MCF 10A (cell line): ENCODE measurements at regions of chr7 and their contacts with region 1.

Region 1: DNA sequence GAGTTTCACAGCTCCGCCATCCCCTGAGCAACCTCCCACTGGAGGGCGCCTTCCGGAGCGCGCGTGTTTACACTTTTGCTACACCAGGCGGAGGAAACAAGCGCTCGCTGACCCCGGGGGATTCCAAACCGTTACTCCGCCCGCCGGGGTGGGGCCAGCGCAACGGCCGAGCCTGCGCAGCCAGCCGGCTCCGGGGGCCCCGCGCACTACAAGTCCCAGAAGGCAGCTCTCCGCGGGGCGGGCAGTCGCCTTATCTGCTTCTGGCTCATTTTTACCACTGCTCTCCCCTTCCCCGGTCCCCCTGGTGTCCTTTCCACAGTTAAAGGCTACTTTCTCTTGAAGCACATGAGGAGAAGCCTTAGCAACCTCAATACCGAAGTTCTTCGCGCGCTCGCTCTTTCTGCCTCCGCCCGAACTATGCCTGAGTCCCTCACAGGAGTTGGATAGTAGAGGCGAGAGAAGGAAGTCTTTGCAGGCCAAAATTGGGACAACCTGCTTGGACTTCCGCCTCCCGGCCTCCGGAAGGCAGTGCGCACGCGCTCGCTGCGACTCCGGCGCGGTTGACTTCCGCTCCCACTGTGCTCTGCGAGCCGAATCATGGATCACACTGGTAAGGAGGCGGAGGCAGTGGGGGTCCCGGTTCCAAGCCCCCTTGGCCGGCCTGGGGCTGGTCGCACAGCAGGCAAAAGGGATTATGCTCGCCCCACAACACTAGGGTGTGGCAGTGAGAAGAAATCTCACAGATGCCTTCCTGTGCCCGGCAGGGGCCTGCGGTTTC is at the start of gene CBLL1:
- DNase-seq: peak; percentile 92
- H3K4me3 Mint-ChIP-seq: peak within 1 kb of the TSS; percentile 94
- H3K27ac Mint-ChIP-seq: peak within 1 kb of the TSS; percentile 97
- H3K4me1 Mint-ChIP-seq: peaks cover 21% of the 10 kb centered on the region
- H3K27me3 Mint-ChIP-seq: no peaks in the 10 kb centered on the region
- CTCF ChIP-seq: peak; percentile 58
- total RNA-seq, gene CBLL1: 34.5 and 39.7 TPM in 2 replicates

Region 2: GRCh38 chr7:107462740-107463444 is 280.9 kb before region 1 on chr7:
- CTCF ChIA-PET with region 1: interaction called, 21 read pairs
- POLR2A ChIA-PET with region 1: interaction called, 5 read pairs
- intact Hi-C with region 1: loop called (anchors 1 kb)
- DNase-seq: peak; percentile 78
- H3K4me3 Mint-ChIP-seq: no peak overlapping the region
- H3K27ac Mint-ChIP-seq: no peak overlapping the region
- H3K4me1 Mint-ChIP-seq: peaks cover 5% of the 10 kb centered on the region
- H3K27me3 Mint-ChIP-seq: no peaks in the 10 kb centered on the region
- CTCF ChIP-seq: peak; percentile 82

Region 3: DNA sequence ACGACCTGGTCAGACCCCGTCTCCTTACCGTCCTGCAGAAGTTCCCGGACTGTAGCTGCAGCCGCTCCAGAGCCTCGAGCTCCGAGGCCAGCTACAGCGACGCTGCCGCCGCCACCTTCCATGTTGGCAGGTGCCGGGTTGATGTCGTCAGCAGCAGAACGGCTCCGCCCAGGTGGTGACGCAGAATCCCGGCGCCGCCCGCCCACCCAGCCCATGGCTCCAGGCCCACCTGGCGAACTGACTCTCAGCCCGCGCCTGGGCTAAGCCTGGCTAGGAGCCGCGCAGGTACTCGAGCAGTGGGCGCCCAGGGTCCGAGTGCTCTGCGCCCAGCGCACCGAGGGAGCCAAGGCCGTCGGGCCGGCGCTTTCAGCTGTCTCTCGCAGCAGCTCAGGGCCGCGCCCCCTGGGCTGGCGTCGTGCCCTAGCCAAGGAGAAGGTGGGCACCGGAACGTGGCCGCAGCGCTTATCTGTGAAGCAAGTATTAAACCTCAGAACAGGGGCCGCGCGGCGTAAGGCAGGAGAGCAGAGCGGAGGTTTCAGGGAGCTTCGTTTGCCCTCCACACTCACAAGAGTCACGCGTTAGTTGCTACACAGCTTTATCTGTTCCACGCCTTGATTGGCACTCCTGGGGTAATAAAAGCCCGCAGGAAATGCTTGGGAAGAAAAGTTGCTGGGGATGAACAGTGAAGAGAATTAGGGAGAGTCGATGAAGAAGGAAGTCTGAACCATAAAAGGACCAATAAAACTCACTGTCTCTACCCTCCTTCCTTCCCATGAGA is 179.8 kb before region 1 on chr7 and contains the starts of genes COG5 and DUS4L:
- CTCF ChIA-PET with region 1: interaction called, 10 read pairs
- POLR2A ChIA-PET with region 1: interaction called, 36 read pairs
- intact Hi-C with region 1: no loop called
- DNase-seq: peak; percentile 80
- H3K4me3 Mint-ChIP-seq: peak within 1 kb of the TSS; percentile 75
- H3K27ac Mint-ChIP-seq: peak within 1 kb of the TSS; percentile 79
- H3K4me1 Mint-ChIP-seq: peaks cover 42% of the 10 kb centered on the region
- H3K27me3 Mint-ChIP-seq: no peaks in the 10 kb centered on the region
- CTCF ChIP-seq: no peak
- total RNA-seq, gene COG5: 40.3 and 40.9 TPM in 2 replicates
- total RNA-seq, gene DUS4L: 14.5 and 16.3 TPM in 2 replicates

Region 4: GRCh38 chr7:107579885-107580715 is 163.7 kb before region 1 on chr7 and contains the start of gene BCAP29:
- CTCF ChIA-PET with region 1: interaction called, 4 read pairs
- POLR2A ChIA-PET with region 1: interaction called, 7 read pairs
- intact Hi-C with region 1: loop called (anchors 5 kb)
- DNase-seq: peak; percentile 71
- H3K4me3 Mint-ChIP-seq: peak within 1 kb of the TSS; percentile 87
- H3K27ac Mint-ChIP-seq: peak within 1 kb of the TSS; percentile 75
- H3K4me1 Mint-ChIP-seq: peaks cover 20% of the 10 kb centered on the region
- H3K27me3 Mint-ChIP-seq: no peaks in the 10 kb centered on the region
- CTCF ChIP-seq: no peak
- total RNA-seq, gene BCAP29: 61.5 and 73.4 TPM in 2 replicates

Region 5: GRCh38 chr7:107594961-107595737 is 148.6 kb before region 1 on chr7:
- CTCF ChIA-PET with region 1: interaction called, 3 read pairs
- POLR2A ChIA-PET with region 1: interaction called, 10 read pairs
- intact Hi-C with region 1: no loop called
- DNase-seq: peak; percentile 92
- H3K4me3 Mint-ChIP-seq: peak overlapping the region; percentile 33
- H3K27ac Mint-ChIP-seq: peak overlapping the region; percentile 91
- H3K4me1 Mint-ChIP-seq: peaks cover 27% of the 10 kb centered on the region
- H3K27me3 Mint-ChIP-seq: no peaks in the 10 kb centered on the region
- CTCF ChIP-seq: no peak

Region 6: GRCh38 chr7:107865956-107866775 is 122.4 kb after region 1 on chr7:
- CTCF ChIA-PET with region 1: interaction called, 227 read pairs
- POLR2A ChIA-PET with region 1: interaction called, 15 read pairs
- intact Hi-C with region 1: no loop called
- DNase-seq: no peak
- H3K4me3 Mint-ChIP-seq: no peak overlapping the region
- H3K27ac Mint-ChIP-seq: peak overlapping the region; percentile 10
- H3K4me1 Mint-ChIP-seq: peaks cover 5% of the 10 kb centered on the region
- H3K27me3 Mint-ChIP-seq: peaks cover 23% of the 10 kb centered on the region
- CTCF ChIP-seq: no peak

Region 7: GRCh38 chr7:107890962-107891635 is 147.3 kb after region 1 on chr7 and contains the start of gene DLD:
- CTCF ChIA-PET with region 1: interaction called, 5 read pairs
- POLR2A ChIA-PET with region 1: interaction called, 44 read pairs
- intact Hi-C with region 1: no loop called
- DNase-seq: peak; percentile 88
- H3K4me3 Mint-ChIP-seq: peak within 1 kb of the TSS; percentile 86
- H3K27ac Mint-ChIP-seq: peak within 1 kb of the TSS; percentile 95
- H3K4me1 Mint-ChIP-seq: peaks cover 26% of the 10 kb centered on the region
- H3K27me3 Mint-ChIP-seq: peaks cover 2% of the 10 kb centered on the region
- CTCF ChIP-seq: no peak
- total RNA-seq, gene DLD: 83.0 and 85.7 TPM in 2 replicates

Region 8: GRCh38 chr7:108368466-108368865 is 624.7 kb after region 1 on chr7:
- CTCF ChIA-PET with region 1: no interaction called
- POLR2A ChIA-PET with region 1: no interaction called
- intact Hi-C with region 1: no loop called
- DNase-seq: no peak
- H3K4me3 Mint-ChIP-seq: no peak overlapping the region
- H3K27ac Mint-ChIP-seq: no peak overlapping the region
- H3K4me1 Mint-ChIP-seq: no peaks in the 10 kb centered on the region
- H3K27me3 Mint-ChIP-seq: no peaks in the 10 kb centered on the region
- CTCF ChIP-seq: no peak